ENCODE measurements at regions of chr17 and their contacts with region 1.

Region 1: GRCh38 chr17:10618202-10618635 is 38.9 kb downstream of the MYH3 start:
- DNase-seq: peak in 4 of 5 donors; percentile 76 to 87 (median 83)
- H3K4me3 ChIP-seq: no peak overlapping the region
- H3K27ac ChIP-seq: no peak overlapping the region
- H3K4me1 ChIP-seq: no peaks in the 10 kb centered on the region
- H3K27me3 ChIP-seq: no peaks in the 10 kb centered on the region
- CTCF ChIP-seq: peak; percentile 85

Region 2: GRCh38 chr17:9924735-9925191 is 693.5 kb before region 1 on chr17:
- intact Hi-C with region 1: loop called (anchors 10 kb)
- DNase-seq: peak in 3 of 5 donors; percentile 64 to 96 (median 95)
- H3K4me3 ChIP-seq: no peak overlapping the region
- H3K27ac ChIP-seq: no peak overlapping the region
- H3K4me1 ChIP-seq: no peaks in the 10 kb centered on the region
- H3K27me3 ChIP-seq: no peaks in the 10 kb centered on the region
- CTCF ChIP-seq: peak; percentile 81